ENCODE measurements at regions of chr15 and their contacts with region 1.

Region 1: GRCh38 chr15:89057504-89058133 is 30.6 kb upstream of the ABHD2 start:
- DNase-seq: peak; percentile 43
- H3K4me3 ChIP-seq: no peak overlapping the region
- H3K27ac ChIP-seq: no peak overlapping the region
- H3K27me3 ChIP-seq: no peaks in the 10 kb centered on the region
- CTCF ChIP-seq: peak; percentile 99

Region 2: DNA sequence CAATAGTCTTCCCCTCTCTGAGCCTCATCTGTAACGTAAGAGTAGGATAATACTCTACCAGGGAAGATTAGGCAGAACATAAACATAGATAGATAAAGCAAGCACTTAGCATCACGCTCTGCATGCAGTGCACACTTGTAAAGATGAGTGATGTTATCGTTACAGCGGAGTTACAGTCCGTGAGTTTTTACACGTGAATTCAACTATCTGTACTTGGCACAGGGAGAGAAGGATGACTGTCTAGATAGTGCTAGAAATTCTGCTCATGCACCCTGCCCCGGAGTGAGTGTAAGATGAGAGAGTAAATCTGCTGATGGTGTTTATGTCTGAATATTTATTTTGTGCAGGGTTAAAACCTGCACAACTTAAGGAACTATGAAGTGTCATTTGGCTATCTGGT is 198.1 kb before region 1 on chr15:
- CTCF ChIA-PET with region 1: no interaction called
- POLR2A ChIA-PET with region 1: no interaction called
- DNase-seq: no peak
- H3K4me3 ChIP-seq: no peak overlapping the region
- H3K27ac ChIP-seq: no peak overlapping the region
- H3K27me3 ChIP-seq: peaks cover 28% of the 10 kb centered on the region
- CTCF ChIP-seq: no peak

Region 3: DNA sequence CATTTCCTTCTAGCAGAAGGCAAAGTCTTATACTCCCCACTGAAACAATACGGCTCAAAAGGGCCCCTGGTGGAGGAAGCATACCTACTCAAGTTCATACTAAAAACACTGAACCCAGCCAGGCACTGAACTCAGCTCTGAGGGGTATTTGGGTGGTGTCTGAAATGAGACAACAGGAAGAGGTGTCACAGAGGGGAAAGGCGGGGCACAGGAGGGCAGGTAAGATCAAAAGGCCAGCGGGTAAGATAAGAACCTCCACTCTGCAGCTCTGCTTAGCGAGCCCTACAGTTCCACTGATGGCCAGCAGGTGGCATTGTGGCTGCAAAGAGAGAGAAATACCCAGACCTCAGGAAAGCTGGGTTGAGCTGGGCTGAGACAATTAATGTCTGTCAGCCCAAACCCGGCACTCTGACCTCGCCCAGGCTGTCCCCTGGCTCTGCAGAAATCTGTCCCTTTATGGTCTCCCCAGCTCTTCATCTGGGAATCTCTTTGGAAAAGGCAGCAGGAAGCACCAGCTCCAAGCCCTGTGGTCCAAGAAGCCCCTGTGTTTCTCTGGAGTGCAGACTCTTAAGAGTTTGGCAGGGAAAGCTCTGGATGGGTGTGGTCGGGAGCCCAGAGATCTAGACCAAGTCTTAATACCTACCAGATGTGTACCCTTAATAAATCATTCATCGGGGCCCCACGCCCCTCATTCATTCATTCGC is 152.8 kb before region 1 on chr15:
- CTCF ChIA-PET with region 1: interaction called, 38 read pairs
- POLR2A ChIA-PET with region 1: no interaction called
- DNase-seq: no peak
- H3K4me3 ChIP-seq: no peak overlapping the region
- H3K27ac ChIP-seq: no peak overlapping the region
- H3K27me3 ChIP-seq: no peaks in the 10 kb centered on the region
- CTCF ChIP-seq: peak; percentile 99

Region 4: GRCh38 chr15:89087830-89088604 is 30.4 kb after region 1 on chr15 and contains the start of gene ABHD2:
- CTCF ChIA-PET with region 1: interaction called, 58 read pairs
- POLR2A ChIA-PET with region 1: interaction called, 3 read pairs
- DNase-seq: peak; percentile 100
- H3K4me3 ChIP-seq: peak within 1 kb of the TSS; percentile 87
- H3K27ac ChIP-seq: peak within 1 kb of the TSS; percentile 98
- H3K27me3 ChIP-seq: no peaks in the 10 kb centered on the region
- CTCF ChIP-seq: no peak
- polyA plus RNA-seq, gene ABHD2: 51.5 and 60.1 TPM in 2 replicates

Region 5: GRCh38 chr15:89114997-89115396 is 57.4 kb after region 1 on chr15:
- CTCF ChIA-PET with region 1: interaction called, 11 read pairs
- POLR2A ChIA-PET with region 1: no interaction called
- DNase-seq: peak; percentile 38
- H3K4me3 ChIP-seq: no peak overlapping the region
- H3K27ac ChIP-seq: no peak overlapping the region
- H3K27me3 ChIP-seq: no peaks in the 10 kb centered on the region
- CTCF ChIP-seq: no peak

Region 6: DNA sequence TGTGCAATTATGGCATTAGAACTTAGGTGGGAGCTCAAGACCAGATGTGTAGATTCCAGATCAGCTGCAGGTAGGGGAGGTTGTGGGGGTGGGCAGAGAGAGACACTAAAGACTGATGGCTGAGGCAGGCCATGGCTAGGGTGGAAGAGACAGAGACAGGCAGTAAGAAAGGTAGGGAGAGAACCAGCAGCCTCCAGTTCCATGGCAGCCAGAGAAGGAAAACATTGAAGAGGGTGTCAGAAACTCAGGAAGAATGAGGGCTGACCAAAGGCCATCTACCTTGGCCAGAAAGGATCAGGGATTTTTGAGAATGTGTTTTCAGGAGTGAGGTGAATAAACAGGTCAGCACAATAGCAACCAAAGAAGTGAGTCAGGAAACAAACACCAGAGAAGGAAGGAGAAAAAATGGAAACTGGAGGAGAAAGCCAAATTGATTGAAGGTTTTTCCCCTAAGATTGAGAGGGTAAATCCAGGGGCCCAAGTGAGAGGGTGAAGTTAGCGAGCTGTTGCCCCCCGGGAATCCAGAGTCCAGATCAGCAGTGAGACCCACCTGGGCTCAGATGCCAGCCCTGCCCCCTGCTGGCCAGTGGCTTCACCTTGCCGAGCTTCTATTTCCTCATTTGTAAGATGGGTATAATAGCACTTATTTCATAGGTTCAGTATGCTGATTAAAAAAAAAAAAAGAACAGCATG is 71.7 kb after region 1 on chr15:
- CTCF ChIA-PET with region 1: interaction called, 52 read pairs
- POLR2A ChIA-PET with region 1: no interaction called
- DNase-seq: no peak
- H3K4me3 ChIP-seq: no peak overlapping the region
- H3K27ac ChIP-seq: no peak overlapping the region
- H3K27me3 ChIP-seq: no peaks in the 10 kb centered on the region
- CTCF ChIP-seq: peak; percentile 73

Region 7: GRCh38 chr15:89171136-89172072 is 113.8 kb after region 1 on chr15:
- CTCF ChIA-PET with region 1: interaction called, 222 read pairs
- POLR2A ChIA-PET with region 1: no interaction called
- DNase-seq: no peak
- H3K4me3 ChIP-seq: no peak overlapping the region
- H3K27ac ChIP-seq: no peak overlapping the region
- H3K27me3 ChIP-seq: no peaks in the 10 kb centered on the region
- CTCF ChIP-seq: peak; percentile 72

Region 8: GRCh38 chr15:89206908-89207331 is 149.3 kb after region 1 on chr15:
- CTCF ChIA-PET with region 1: interaction called, 25 read pairs
- POLR2A ChIA-PET with region 1: no interaction called
- DNase-seq: peak; percentile 16
- H3K4me3 ChIP-seq: peak overlapping the region; percentile 41
- H3K27ac ChIP-seq: no peak overlapping the region
- H3K27me3 ChIP-seq: no peaks in the 10 kb centered on the region
- CTCF ChIP-seq: peak; percentile 97

Region 9: DNA sequence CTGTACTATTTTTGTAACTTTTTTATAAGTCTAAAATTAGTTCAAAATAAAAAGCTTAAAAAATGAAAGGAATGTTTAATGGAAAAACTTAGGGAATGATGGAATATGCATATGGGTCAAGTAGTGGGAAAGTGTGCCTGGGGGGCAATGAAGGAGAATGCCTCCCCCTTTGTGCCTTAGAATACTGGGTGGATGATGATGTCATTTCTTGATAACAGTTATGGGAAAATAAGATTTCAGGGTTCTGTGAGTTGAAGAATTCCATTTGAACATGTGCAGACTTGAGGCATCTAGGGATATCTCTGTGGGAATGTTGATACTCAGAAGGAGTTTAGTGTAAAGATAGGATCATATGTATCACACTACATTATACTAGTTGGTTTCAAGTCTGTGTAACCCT is 646.8 kb after region 1 on chr15:
- CTCF ChIA-PET with region 1: no interaction called
- POLR2A ChIA-PET with region 1: no interaction called
- DNase-seq: no peak
- H3K4me3 ChIP-seq: no peak overlapping the region
- H3K27ac ChIP-seq: no peak overlapping the region
- H3K27me3 ChIP-seq: peaks cover 36% of the 10 kb centered on the region
- CTCF ChIP-seq: no peak

Measured in AG04450 (cell line).